ENCODE measurements at regions of chr5 and their contacts with region 1.

Region 1: DNA sequence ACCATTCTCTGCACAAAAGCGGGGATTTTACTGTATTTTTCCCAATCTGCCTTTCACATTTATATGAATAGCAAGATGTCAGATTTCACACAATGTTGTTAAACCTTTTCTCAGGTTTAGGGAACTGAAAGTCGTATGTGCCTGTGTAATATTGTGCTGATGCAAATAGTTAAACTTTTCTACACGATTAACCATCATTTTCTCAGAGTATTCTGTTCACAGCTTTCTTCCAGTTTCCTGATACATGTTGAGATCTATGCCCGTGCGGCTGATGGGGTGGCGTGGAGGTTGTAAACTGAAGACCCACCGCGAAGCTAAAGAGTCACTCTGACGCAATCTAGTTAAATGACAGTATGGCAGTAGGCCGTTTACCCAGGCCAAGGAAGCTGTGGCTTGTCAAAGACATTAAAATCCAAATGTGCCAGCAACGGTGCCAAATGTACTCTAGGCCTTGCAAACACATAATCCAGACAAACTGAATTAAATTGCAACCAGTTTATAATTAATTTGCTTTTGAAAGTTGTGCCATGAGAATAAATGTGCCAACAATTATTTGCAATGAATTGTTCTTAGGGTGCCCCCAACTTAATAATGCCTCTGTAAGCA is 145.7 kb downstream of the EBF1 start:
- DNase-seq: no peak
- ATAC-seq: no peak

Region 2: DNA sequence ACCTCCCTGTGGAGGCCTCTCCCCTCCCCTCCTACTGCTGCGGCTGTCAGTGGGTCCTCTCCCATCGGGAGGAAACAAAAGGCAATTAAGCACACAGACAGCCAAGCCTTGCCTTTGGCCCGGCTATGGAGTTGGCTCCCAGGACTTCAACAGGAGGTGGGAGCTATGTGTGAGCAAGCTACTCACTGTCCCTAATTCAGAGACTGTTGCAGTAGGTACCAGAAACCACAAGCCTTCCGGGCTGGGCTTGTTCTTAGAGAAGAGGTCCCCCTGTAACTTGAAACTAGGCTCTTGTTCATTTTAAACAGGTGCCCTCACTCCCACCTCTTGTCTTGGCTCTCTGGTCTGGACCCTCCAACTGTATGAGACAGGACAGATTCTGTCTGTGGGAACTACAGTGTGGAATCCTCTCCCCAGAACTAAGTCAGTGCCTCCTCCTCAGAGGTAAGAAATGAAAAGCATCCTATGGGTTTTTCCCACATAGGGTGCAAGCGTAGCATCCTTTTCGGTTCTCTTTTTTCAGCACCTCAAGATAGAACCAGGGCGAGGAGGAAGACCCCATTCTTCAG is 415.4 kb before region 1 on chr5:
- intact Hi-C with region 1: no loop called
- DNase-seq: no peak
- ATAC-seq: no peak

Region 3: GRCh38 chr5:159017786-159018185 is 63.8 kb after region 1 on chr5:
- intact Hi-C with region 1: no loop called
- DNase-seq: peak; percentile 75
- ATAC-seq: peak; percentile 72

Region 4: DNA sequence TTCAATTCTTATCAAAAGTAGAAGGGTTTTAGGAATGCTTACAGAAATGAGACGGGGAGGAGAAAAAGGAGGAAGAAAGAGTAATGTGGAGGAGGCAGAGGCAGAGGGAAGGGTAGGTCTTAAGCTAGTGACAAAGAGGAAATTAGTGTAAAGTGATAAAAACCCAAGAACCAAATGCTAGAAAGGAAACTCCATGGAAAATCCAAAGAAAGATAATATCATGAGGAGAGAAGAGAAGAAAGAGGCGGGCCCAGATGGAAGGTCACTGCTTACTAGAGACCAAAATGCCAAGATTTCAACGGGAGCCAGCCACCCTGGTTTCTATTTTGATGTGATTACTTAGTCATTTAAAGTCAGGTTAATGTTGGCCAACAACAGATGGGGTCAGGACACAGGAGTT is 444.9 kb after region 1 on chr5:
- intact Hi-C with region 1: loop called (anchors 5 kb)
- DNase-seq: no peak
- ATAC-seq: no peak

Region 5: DNA sequence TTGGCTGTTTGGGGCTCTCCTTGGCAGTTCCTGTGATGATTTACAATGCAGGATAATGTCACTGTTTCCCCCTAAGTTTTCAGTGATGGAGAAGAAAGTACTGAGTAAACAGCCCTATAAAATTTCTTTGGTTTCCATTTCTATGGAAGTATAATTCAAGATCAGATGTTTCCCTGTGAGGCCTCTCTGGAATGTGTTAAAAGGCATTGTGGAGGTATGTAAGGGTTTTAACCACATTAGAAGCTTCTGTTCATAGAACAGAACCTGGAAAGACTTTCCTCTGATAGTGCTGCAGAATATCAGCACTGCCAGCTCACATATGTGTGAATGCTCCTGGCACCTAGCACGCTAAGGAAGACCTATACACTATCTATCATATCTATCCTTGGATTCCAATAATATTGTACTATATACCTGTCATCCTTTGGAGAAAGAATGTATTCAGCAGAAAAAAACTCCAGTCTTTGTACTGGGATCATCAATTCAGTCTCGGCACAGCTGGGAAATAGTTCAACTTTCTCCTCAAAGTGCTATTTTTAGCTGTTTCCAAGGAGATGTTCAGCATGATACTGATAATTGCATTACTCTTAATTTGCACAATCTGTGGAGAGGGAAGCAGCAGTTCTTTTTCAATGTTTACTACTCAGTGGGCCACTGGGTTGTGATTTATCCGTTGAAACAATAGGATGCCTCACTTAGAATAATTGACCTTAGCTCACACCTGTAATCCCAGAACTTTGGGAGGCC is 1076.8 kb after region 1 on chr5:
- intact Hi-C with region 1: no loop called
- DNase-seq: no peak
- ATAC-seq: peak; percentile 57

Measured in sciatic nerve (tissue), 2 donors.